AG04450 (cell line): ENCODE measurements at regions of chr22 and their contacts with region 1.

Region 1: GRCh38 chr22:50582562-50583293 is at the start of gene CHKB:
- DNase-seq: peak; percentile 89
- H3K4me3 ChIP-seq: peak within 1 kb of the TSS; percentile 83
- H3K27ac ChIP-seq: peak within 1 kb of the TSS; percentile 84
- H3K27me3 ChIP-seq: peaks cover 8% of the 10 kb centered on the region
- CTCF ChIP-seq: no peak
- polyA plus RNA-seq, gene CHKB: 22.5 and 28.2 TPM in 2 replicates

Region 2: GRCh38 chr22:50507991-50508884 is 74.5 kb before region 1 on chr22 and contains the start of gene NCAPH2:
- CTCF ChIA-PET with region 1: no interaction called
- POLR2A ChIA-PET with region 1: interaction called, 11 read pairs
- DNase-seq: peak; percentile 90
- H3K4me3 ChIP-seq: peak within 1 kb of the TSS; percentile 99
- H3K27ac ChIP-seq: peak within 1 kb of the TSS; percentile 68
- H3K27me3 ChIP-seq: no peaks in the 10 kb centered on the region
- CTCF ChIP-seq: no peak
- polyA plus RNA-seq, gene NCAPH2: 10.4 and 13.2 TPM in 2 replicates

Region 3: GRCh38 chr22:50603461-50604255 is 20.9 kb after region 1 on chr22:
- CTCF ChIA-PET with region 1: no interaction called
- POLR2A ChIA-PET with region 1: no interaction called
- DNase-seq: no peak
- H3K4me3 ChIP-seq: no peak overlapping the region
- H3K27ac ChIP-seq: no peak overlapping the region
- H3K27me3 ChIP-seq: peaks cover 62% of the 10 kb centered on the region
- CTCF ChIP-seq: no peak

Region 4: DNA sequence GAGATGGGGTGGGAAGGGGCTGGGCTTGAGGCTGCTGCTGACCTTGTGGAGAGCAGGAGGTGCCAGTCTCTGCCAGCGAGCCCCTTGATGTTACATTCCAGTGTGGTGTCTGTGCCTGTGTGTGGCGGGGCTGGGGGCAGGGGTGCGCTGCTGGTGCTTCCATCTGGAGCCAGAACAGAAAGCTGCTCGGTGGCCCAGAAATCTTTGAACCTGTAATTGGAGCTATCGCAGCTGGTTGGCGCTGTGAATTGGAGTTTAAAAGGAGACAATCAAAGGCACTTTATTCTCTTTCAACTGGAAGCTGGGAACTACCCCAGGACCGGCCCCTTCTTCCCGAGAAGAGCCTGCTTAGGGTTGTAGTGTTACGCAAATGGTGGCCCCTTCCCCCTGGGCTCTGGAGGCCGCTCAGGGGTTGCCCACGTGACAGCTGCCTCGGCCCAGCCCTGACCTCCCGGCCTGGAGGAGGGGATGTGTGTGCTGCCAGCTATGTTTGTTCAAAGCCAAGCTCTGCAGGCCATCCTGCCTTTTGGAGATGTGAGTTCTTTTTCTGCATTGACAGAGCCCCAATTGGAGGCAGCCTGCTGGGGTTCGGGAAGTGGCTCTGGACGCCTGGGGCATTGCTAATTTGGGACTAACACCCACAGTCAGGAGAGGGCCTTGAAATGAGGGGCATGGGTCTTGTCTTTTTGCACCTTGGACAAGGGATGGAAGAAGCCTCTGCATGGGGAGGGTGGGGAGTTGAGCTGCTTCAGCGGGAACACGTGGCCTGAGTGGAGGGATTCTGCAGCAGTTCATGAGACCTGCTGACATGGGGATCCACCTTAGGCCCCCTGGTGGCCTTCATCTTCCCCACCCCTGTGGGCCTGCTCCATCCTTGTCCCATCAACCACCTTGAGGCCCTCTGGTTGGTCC is 59.2 kb after region 1 on chr22:
- CTCF ChIA-PET with region 1: no interaction called
- POLR2A ChIA-PET with region 1: no interaction called
- DNase-seq: no peak
- H3K4me3 ChIP-seq: no peak overlapping the region
- H3K27ac ChIP-seq: no peak overlapping the region
- H3K27me3 ChIP-seq: peaks cover 47% of the 10 kb centered on the region
- CTCF ChIP-seq: peak; percentile 54